Ovary (tissue), 10 donors: ENCODE measurements at regions of chr5 and their contacts with region 1.

Region 1: GRCh38 chr5:157948738-157949410 is 89.9 kb upstream of the CLINT1 start:
- DNase-seq: peak; percentile 79 to 88 (median 82)
- H3K4me3 ChIP-seq: no peak overlapping the region
- H3K27ac ChIP-seq: no peak overlapping the region
- H3K4me1 ChIP-seq: peaks cover 1% of the 10 kb centered on the region
- H3K27me3 ChIP-seq: no peaks in the 10 kb centered on the region
- CTCF ChIP-seq: peak; percentile 45 to 73 (median 54)
- EP300 ChIP-seq: no peak
- POLR2A ChIP-seq: no peak

Region 2: DNA sequence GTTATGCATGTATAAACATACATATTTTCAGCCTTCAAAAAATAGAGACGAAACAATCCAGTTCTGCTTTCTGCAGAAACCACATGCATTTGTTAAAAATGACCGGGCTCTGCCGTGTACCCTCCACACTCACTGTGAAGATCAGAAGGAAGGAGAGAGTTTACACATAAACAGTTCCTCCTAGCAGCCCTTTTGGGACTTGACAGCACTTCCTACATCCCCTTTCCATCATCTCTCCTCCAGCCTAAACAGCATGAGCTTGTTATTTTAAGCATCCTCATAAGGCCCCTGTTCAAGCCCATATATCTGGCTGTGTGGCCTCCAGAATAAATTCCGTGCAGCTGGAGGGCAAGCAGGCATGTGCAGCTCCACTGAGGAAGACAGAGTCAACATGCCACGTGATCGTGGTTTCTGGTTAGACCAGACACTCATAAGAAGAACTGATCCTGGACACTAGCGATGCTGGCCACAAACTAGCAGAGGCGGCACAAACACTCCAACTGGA is 446.7 kb before region 1 on chr5:
- intact Hi-C with region 1: no loop called
- DNase-seq: no peak
- H3K4me3 ChIP-seq: no peak overlapping the region
- H3K27ac ChIP-seq: no peak overlapping the region
- H3K4me1 ChIP-seq: no peaks in the 10 kb centered on the region
- H3K27me3 ChIP-seq: no peaks in the 10 kb centered on the region
- CTCF ChIP-seq: no peak
- EP300 ChIP-seq: no peak
- POLR2A ChIP-seq: no peak

Region 3: GRCh38 chr5:157858527-157859226 is 90.2 kb before region 1 on chr5 and contains the start of gene CLINT1:
- intact Hi-C with region 1: loop called in 1 of 4 experiments (anchors 10 kb)
- DNase-seq: peak; percentile 85 to 93 (median 91)
- H3K4me3 ChIP-seq: peak within 1 kb of the TSS; percentile 92
- H3K27ac ChIP-seq: peak within 1 kb of the TSS; percentile 71 to 75
- H3K4me1 ChIP-seq: peaks cover 4% of the 10 kb centered on the region
- H3K27me3 ChIP-seq: no peaks in the 10 kb centered on the region
- CTCF ChIP-seq: no peak
- EP300 ChIP-seq: no peak
- POLR2A ChIP-seq: peak; percentile 61
- total RNA-seq, gene CLINT1: 40.5 to 67.8 (median 50.3) TPM